OCI-LY7 (cell line): ENCODE measurements at regions of chr16 and their contacts with region 1.

Region 1: DNA sequence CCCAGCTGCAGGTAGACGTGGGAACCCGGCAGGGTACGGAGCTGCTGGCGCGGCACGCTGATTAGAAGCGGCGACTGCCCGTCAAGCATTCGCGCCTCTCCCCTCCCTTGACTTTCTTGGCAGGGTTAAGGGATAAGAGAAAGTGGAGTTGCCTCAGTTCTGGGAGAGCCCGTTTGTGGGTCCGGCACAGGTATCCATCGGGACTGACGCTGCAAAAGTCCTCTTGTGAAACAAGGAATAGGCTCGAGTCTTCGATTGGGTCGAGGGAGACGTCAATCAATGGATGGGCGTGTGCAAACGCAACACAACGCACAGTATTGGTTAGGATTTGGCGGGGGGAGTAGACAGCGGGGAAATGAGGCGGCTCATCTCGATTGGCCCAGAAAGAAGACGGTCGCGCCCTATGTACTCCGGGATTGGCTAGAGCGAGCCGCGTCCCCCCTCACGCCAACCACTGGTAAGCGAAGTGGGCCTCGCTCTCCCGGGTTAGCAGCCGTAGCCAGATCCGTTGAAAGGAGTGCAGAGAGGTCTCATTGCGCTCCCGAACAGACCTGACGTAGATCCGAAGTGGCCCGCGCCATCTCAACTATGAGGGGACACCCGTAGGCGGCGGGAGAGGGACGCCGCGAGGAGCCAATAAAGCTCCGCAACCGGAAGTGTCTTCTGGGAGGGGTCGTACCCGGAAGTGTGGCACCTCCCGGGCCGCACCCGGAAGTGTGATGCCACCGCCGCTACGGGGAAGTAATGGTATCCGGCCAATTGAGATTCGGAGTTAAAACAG is at the start of gene MON1B:
- DNase-seq: peak; percentile 97
- H3K4me3 ChIP-seq: peak within 1 kb of the TSS; percentile 99
- H3K27ac ChIP-seq: peak within 1 kb of the TSS; percentile 93
- H3K4me1 ChIP-seq: peaks cover 11% of the 10 kb centered on the region
- CTCF ChIP-seq: no peak
- total RNA-seq, gene MON1B: 14.0 and 20.4 TPM in 2 replicates

Region 2: GRCh38 chr16:75432828-75433731 is 1757.6 kb before region 1 on chr16 and contains the start of gene CFDP1:
- CTCF ChIA-PET with region 1: no interaction called
- POLR2A ChIA-PET with region 1: no interaction called
- intact Hi-C with region 1: loop called (anchors 5 kb)
- DNase-seq: peak; percentile 97
- H3K4me3 ChIP-seq: peak within 1 kb of the TSS; percentile 78
- H3K27ac ChIP-seq: no peak within 1 kb of the TSS
- H3K4me1 ChIP-seq: peaks cover 20% of the 10 kb centered on the region
- CTCF ChIP-seq: no peak
- total RNA-seq, gene CFDP1: 30.0 and 55.1 TPM in 2 replicates

Region 3: GRCh38 chr16:75647492-75648264 is 1543.0 kb before region 1 on chr16 and contains the starts of genes KARS1 and TERF2IP:
- CTCF ChIA-PET with region 1: no interaction called
- POLR2A ChIA-PET with region 1: no interaction called
- intact Hi-C with region 1: loop called (anchors 1 kb)
- DNase-seq: peak; percentile 93
- H3K4me3 ChIP-seq: peak within 1 kb of the TSS; percentile 88
- H3K27ac ChIP-seq: peak within 1 kb of the TSS; percentile 82
- H3K4me1 ChIP-seq: peaks cover 57% of the 10 kb centered on the region
- CTCF ChIP-seq: no peak
- total RNA-seq, gene KARS1: 126 and 143 TPM in 2 replicates
- total RNA-seq, gene TERF2IP: 41.6 and 42.3 TPM in 2 replicates

Region 4: DNA sequence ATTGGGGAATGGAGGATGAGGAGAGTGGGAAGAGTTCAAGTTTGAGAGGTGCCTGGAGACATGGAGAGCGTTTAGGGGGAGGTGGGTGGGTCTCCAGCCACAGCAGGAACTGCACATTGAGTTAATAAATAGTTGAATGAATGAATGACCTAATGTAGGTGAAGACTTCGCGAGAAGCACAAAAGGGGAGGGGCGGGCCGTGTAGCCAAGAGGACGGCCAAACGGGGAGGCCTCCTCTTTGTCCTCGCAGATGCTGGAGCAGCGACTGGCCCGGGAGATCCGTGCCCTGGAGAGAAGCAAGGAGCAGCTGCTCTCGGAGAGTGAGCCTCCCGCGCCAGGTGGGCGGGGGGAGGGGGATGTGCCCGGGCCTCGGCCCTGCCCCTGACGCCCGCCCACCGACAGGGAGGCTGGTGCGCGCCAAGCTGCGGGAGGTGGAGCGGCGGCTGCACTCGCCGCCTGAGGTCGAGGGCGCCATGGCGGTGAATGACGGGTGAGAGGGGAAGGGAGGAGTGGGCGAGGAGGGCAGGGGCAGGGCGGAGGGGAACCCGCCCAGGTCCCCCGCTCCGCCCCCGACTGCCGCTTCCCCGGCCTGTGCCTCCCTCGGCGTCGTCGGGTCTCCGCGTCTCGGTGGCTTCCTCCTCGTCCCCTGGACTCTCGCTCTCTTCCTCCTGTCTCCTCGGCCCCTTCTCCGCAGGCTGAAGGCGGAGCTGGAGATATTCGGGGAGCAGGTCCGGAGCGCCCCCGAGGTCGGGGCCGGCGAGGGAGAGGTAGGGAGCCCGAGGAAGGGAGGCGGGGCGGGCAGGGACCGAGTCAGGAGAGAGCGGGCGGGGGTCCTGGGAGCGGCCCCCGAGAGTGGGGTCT is 21.4 kb after region 1 on chr16:
- CTCF ChIA-PET with region 1: no interaction called
- POLR2A ChIA-PET with region 1: interaction called, 3 read pairs
- intact Hi-C with region 1: loop called (anchors 1 kb)
- DNase-seq: peak; percentile 67
- H3K4me3 ChIP-seq: peak overlapping the region; percentile 74
- H3K27ac ChIP-seq: no peak overlapping the region
- H3K4me1 ChIP-seq: peaks cover 10% of the 10 kb centered on the region
- CTCF ChIP-seq: no peak

Region 5: DNA sequence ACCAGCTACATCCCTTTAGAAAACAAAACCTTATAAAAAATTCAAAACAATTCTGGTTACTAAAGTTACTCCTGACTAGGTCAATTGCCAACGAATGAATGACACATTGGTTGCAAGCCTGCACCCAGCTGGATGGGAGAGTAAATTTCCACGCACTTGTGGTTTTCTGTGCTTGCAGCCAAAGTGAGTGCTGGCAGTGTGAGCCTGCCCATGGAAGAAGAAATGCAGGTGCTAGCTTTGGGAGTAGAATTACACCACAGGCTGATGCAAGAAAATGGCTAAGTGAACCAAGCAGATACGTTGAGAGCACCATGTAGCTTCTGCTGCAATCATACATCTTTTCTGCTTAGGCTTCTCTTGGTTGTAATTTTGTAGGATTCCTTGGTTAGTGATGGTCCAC is 83.1 kb after region 1 on chr16:
- CTCF ChIA-PET with region 1: no interaction called
- POLR2A ChIA-PET with region 1: no interaction called
- intact Hi-C with region 1: no loop called
- DNase-seq: no peak
- H3K4me3 ChIP-seq: no peak overlapping the region
- H3K27ac ChIP-seq: no peak overlapping the region
- H3K4me1 ChIP-seq: no peaks in the 10 kb centered on the region
- CTCF ChIP-seq: no peak

Region 6: GRCh38 chr16:77603701-77604380 is 413.2 kb after region 1 on chr16:
- CTCF ChIA-PET with region 1: no interaction called
- POLR2A ChIA-PET with region 1: no interaction called
- intact Hi-C with region 1: no loop called
- DNase-seq: no peak
- H3K4me3 ChIP-seq: no peak overlapping the region
- H3K27ac ChIP-seq: no peak overlapping the region
- H3K4me1 ChIP-seq: no peaks in the 10 kb centered on the region
- CTCF ChIP-seq: no peak

Region 7: DNA sequence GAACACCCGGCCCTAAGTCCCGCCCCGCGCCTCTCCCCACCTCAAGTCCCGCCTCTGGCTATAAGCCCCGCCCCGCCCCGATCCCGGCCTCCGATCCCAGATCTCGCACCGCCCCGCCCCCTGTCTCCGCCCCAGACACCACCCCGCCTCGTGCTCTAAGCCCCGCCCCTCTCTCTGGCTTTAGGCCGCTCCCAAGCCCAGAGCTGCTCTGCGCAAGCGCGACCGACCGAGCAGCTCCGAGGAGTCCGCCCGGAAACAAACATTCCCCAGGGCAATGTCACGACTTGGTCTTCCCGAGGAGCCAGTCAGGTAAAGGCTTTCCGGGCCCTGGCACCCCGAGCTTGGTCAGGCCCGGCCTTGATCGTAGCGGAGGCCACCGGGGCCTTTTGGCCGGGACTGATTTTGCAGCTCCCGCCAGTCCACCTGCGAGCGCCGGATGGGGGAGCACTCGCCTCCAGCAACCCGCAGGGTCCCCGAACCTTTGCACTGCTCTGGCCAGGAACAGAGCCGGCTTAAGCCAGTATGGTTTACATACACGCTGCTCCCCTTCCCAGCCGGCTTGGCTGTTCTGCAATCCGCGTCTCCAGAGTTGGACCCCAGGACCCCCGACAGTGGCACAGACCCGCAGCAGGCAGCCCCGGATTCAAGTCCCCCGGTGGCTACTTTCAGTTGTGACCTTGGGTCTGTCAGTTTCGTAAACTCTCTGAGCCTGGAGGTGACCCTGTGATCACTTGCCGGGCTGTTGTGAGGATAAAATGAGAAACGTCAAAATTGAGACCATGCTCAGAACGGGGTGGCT is 531.8 kb after region 1 on chr16 and contains the start of gene NUDT7:
- CTCF ChIA-PET with region 1: no interaction called
- POLR2A ChIA-PET with region 1: no interaction called
- intact Hi-C with region 1: loop called (anchors 10 kb)
- DNase-seq: peak; percentile 96
- H3K4me3 ChIP-seq: peak within 1 kb of the TSS; percentile 82
- H3K27ac ChIP-seq: peak within 1 kb of the TSS; percentile 44
- H3K4me1 ChIP-seq: peaks cover 17% of the 10 kb centered on the region
- CTCF ChIP-seq: peak; percentile 67
- total RNA-seq, gene NUDT7: 4.4 and 9.1 TPM in 2 replicates